GM12878 (cell line): ENCODE measurements at regions of chr5 and their contacts with region 1.

Region 1: DNA sequence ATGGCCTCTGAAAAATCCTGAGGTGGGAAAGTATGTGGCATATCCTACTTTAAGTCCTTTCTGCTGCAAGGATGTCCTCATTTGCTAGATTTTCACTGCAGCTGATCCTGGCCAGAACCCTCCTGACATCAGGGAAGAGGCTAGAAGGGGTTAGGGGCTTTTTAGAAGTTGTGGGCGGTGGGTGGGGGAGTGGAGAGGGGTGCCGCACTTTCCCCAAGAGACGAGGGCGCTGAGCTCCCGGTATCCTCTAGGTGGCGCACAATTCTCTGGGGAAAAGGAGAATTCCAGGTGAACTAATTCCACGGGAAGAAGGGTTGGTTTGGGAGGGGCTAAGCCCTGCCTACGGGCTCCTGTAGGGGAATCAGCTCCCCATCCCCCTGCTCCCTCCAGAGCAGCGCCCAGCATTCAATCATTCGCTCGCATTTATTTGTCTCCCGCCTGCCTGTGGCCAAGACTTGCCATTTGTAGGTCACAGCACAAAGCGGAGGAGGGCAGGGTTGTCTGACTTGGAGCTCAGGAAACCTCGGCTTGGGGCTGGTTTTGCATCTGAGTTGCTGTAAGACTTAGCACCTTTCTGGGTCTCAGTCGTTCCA is 42.9 kb upstream of the HAND1 start:
- DNase-seq: no peak
- ATAC-seq: peak; percentile 42
- H3K4me3 ChIP-seq: no peak overlapping the region
- H3K27ac ChIP-seq: no peak overlapping the region
- H3K4me1 ChIP-seq: 0 out of 2 replicates have a peak, but pooled peaks cover 4% of the 10 kb centered on the region
- H3K27me3 ChIP-seq: peaks cover 0 to 2% of the 10 kb centered on the region in 2 experiments; a peak in 1 of 4 replicates
- CTCF ChIP-seq: peak; percentile 64 to 87 (median 74)
- EP300 ChIP-seq: no peak
- POLR2A ChIP-seq: no peak
- RAD21 ChIP-seq: peak; percentile 43

Region 2: GRCh38 chr5:154002093-154002492 is 518.9 kb before region 1 on chr5:
- CTCF ChIA-PET with region 1: no interaction called
- POLR2A ChIA-PET with region 1: no interaction called
- RAD21 ChIA-PET with region 1: no interaction called
- SMC1A ChIA-PET with region 1: no interaction called
- in situ Hi-C with region 1: no loop called
- intact Hi-C with region 1: no loop called
- DNase-seq: no peak
- ATAC-seq: no peak
- H3K4me3 ChIP-seq: no peak overlapping the region
- H3K27ac ChIP-seq: no peak overlapping the region
- H3K4me1 ChIP-seq: no peaks in the 10 kb centered on the region
- H3K27me3 ChIP-seq: no peaks in the 10 kb centered on the region
- CTCF ChIP-seq: no peak
- EP300 ChIP-seq: no peak
- POLR2A ChIP-seq: no peak
- RAD21 ChIP-seq: no peak

Region 3: GRCh38 chr5:154445422-154446182 is 75.4 kb before region 1 on chr5 and contains the start of gene SAP30L:
- CTCF ChIA-PET with region 1: interaction called, 11 read pairs
- POLR2A ChIA-PET with region 1: interaction called, 3 read pairs
- RAD21 ChIA-PET with region 1: no interaction called
- SMC1A ChIA-PET with region 1: no interaction called
- in situ Hi-C with region 1: no loop called
- intact Hi-C with region 1: no loop called
- DNase-seq: peak; percentile 81
- ATAC-seq: peak; percentile 91
- H3K4me3 ChIP-seq: peak within 1 kb of the TSS; percentile 87
- H3K27ac ChIP-seq: peak within 1 kb of the TSS; percentile 84
- H3K4me1 ChIP-seq: peaks cover 5% of the 10 kb centered on the region
- H3K27me3 ChIP-seq: no peaks in the 10 kb centered on the region
- CTCF ChIP-seq: no peak
- EP300 ChIP-seq: no peak
- POLR2A ChIP-seq: peak; percentile 85
- RAD21 ChIP-seq: no peak
- polyA plus RNA-seq, gene SAP30L: 2.4 to 15.4 TPM

Region 4: DNA sequence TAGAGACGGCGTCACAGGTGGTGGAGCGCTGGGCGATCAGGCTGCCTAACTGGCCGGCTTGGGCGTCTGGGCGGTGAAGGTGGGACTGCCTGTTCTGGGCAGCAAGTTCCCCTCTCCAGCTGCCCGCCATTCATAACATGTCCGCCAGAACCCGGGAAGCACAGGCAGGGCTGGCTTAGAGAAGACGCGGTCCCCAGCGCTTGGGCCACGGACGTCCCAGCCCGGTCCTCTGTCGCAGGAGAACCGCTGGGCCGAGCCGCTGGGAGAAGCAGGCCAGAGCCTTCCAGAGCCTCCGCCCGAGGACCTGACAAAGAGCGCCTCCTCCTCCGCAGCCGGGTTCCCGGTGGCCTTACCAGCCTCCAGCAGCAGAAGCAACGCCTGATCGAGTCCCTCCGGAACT is 27.7 kb before region 1 on chr5:
- CTCF ChIA-PET with region 1: interaction called, 29 read pairs
- POLR2A ChIA-PET with region 1: no interaction called
- RAD21 ChIA-PET with region 1: no interaction called
- SMC1A ChIA-PET with region 1: interaction called, 108 read pairs
- in situ Hi-C with region 1: no loop called
- intact Hi-C with region 1: no loop called
- DNase-seq: no peak
- ATAC-seq: no peak
- H3K4me3 ChIP-seq: no peak overlapping the region
- H3K27ac ChIP-seq: no peak overlapping the region
- H3K4me1 ChIP-seq: no peaks in the 10 kb centered on the region; the same call in 1 of the 2 replicates
- H3K27me3 ChIP-seq: no peaks in the 10 kb centered on the region
- CTCF ChIP-seq: no peak
- EP300 ChIP-seq: no peak
- POLR2A ChIP-seq: no peak
- RAD21 ChIP-seq: no peak

Region 5: GRCh38 chr5:154505611-154506010 is 15.3 kb before region 1 on chr5:
- CTCF ChIA-PET with region 1: interaction called, 41 read pairs
- POLR2A ChIA-PET with region 1: interaction called, 3 read pairs
- RAD21 ChIA-PET with region 1: interaction called, 62 read pairs
- SMC1A ChIA-PET with region 1: interaction called, 108 read pairs
- in situ Hi-C with region 1: no loop called
- intact Hi-C with region 1: no loop called
- DNase-seq: no peak
- ATAC-seq: no peak
- H3K4me3 ChIP-seq: no peak overlapping the region
- H3K27ac ChIP-seq: no peak overlapping the region
- H3K4me1 ChIP-seq: peaks cover 41% of the 10 kb centered on the region
- H3K27me3 ChIP-seq: no peaks in the 10 kb centered on the region
- CTCF ChIP-seq: no peak
- EP300 ChIP-seq: no peak
- POLR2A ChIP-seq: no peak
- RAD21 ChIP-seq: no peak

Region 6: GRCh38 chr5:154559398-154560276 is 38.7 kb after region 1 on chr5:
- CTCF ChIA-PET with region 1: interaction called, 18 read pairs
- POLR2A ChIA-PET with region 1: no interaction called
- RAD21 ChIA-PET with region 1: no interaction called
- SMC1A ChIA-PET with region 1: no interaction called
- in situ Hi-C with region 1: no loop called
- intact Hi-C with region 1: no loop called
- DNase-seq: peak; percentile 12
- ATAC-seq: peak; percentile 85
- H3K4me3 ChIP-seq: 0 out of 2 replicates have a peak overlapping the region, but pooled peaks have one; percentile 10
- H3K27ac ChIP-seq: peak overlapping the region; percentile 24; the same call in 1 of the 2 replicates
- H3K4me1 ChIP-seq: peaks cover 12% of the 10 kb centered on the region
- H3K27me3 ChIP-seq: no peaks in the 10 kb centered on the region
- CTCF ChIP-seq: no peak
- EP300 ChIP-seq: no peak
- POLR2A ChIP-seq: no peak
- RAD21 ChIP-seq: no peak

Region 7: DNA sequence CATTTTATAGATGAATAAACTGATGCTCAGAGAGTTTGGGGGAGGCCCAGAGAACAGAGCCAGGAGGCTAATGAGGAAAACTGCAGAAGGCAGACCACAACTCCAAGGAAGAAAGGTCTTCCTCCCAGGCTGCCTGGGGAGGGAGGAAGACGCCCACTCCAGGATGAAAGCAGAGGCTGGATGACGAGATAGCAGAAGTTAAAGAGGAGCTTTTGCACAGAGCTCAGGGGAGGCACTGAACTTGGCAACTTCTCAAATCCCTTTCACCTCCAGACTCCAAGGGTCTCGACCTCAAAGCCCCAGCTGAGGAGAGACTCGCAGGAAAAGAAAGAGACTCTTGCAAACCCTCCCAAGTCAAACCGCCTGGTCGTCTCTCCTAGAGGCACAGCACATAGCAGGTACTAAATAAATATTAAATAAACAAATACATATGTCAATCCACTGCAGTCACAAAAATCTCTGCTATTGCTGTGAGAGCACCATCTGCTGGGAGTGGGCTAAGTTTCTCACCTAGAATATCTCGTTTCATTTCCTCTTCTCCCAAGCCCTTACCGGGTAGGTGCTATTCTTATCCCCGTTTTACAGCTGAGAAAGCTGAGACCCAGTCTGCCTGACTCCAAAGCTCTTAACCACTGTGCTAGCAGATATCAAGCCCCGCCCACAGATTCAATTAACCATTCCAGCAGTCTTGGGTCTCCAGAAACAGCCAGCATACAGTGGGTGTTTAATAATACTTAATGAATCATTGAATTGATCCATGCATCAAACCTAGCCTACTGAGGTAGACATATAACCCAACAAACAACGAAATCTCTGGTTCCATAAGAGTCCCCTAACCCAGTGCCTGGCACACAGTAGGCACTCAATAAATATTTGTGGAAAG is 54.8 kb after region 1 on chr5:
- CTCF ChIA-PET with region 1: interaction called, 79 read pairs
- POLR2A ChIA-PET with region 1: interaction called, 3 read pairs
- RAD21 ChIA-PET with region 1: interaction called, 26 read pairs
- SMC1A ChIA-PET with region 1: interaction called, 16 read pairs
- in situ Hi-C with region 1: no loop called
- intact Hi-C with region 1: loop called (anchors 5 kb)
- DNase-seq: peak; percentile 66
- ATAC-seq: peak; percentile 97
- H3K4me3 ChIP-seq: no peak overlapping the region
- H3K27ac ChIP-seq: no peak overlapping the region
- H3K4me1 ChIP-seq: peaks cover 16% of the 10 kb centered on the region
- H3K27me3 ChIP-seq: no peaks in the 10 kb centered on the region
- CTCF ChIP-seq: peak; percentile 60 to 67 (median 64)
- EP300 ChIP-seq: no peak
- POLR2A ChIP-seq: no peak
- RAD21 ChIP-seq: peak; percentile 74